Sigmoid colon (tissue), 7 donors: ENCODE measurements at regions of chr9 and their contacts with region 1.

Region 1: GRCh38 chr9:72364679-72365524 is at the start of gene ZFAND5:
- DNase-seq: peak; percentile 100
- H3K4me3 ChIP-seq: peak within 1 kb of the TSS; percentile 73 to 96 (median 88)
- H3K27ac ChIP-seq: peak within 1 kb of the TSS; percentile 99 to 100 (median 100)
- H3K4me1 ChIP-seq: peaks cover 0 to 28% (median 26%) of the 10 kb centered on the region in 4 donors
- H3K27me3 ChIP-seq: no peaks in the 10 kb centered on the region
- CTCF ChIP-seq: no peak
- EP300 ChIP-seq: peak in 2 of 4 donors; percentile 71 to 74
- POLR2A ChIP-seq: peak; percentile 94 to 97
- total RNA-seq, gene ZFAND5: 126 to 307 (median 177) TPM

Region 2: GRCh38 chr9:70413798-70414775 is 1950.8 kb before region 1 on chr9 and contains the start of gene KLF9:
- intact Hi-C with region 1: loop called (anchors 5 kb)
- DNase-seq: peak; percentile 100
- H3K4me3 ChIP-seq: peak within 1 kb of the TSS; percentile 79 to 96 (median 84)
- H3K27ac ChIP-seq: peak within 1 kb of the TSS; percentile 98 to 100 (median 99)
- H3K4me1 ChIP-seq: peaks cover 0 to 54% (median 46%) of the 10 kb centered on the region in 4 donors
- H3K27me3 ChIP-seq: no peaks in the 10 kb centered on the region
- CTCF ChIP-seq: no peak
- EP300 ChIP-seq: peak; percentile 83 to 97 (median 93)
- POLR2A ChIP-seq: peak; percentile 97
- total RNA-seq, gene KLF9: 120 to 184 (median 159) TPM

Region 3: GRCh38 chr9:71683598-71684235 is 681.2 kb before region 1 on chr9:
- intact Hi-C with region 1: no loop called
- DNase-seq: no peak
- H3K4me3 ChIP-seq: no peak overlapping the region
- H3K27ac ChIP-seq: no peak overlapping the region
- H3K4me1 ChIP-seq: peaks cover 0 to 40% (median 28%) of the 10 kb centered on the region in 4 donors
- H3K27me3 ChIP-seq: no peaks in the 10 kb centered on the region
- CTCF ChIP-seq: peak in 3 of 4 experiments; percentile 17 to 38 (median 30)
- EP300 ChIP-seq: no peak
- POLR2A ChIP-seq: no peak

Region 4: GRCh38 chr9:72315510-72316311 is 49.2 kb before region 1 on chr9:
- intact Hi-C with region 1: loop called (anchors 1 kb)
- DNase-seq: peak; percentile 82
- H3K4me3 ChIP-seq: peak overlapping the region in 2 of 4 donors; percentile 26 to 30
- H3K27ac ChIP-seq: peak overlapping the region; percentile 74 to 85 (median 78)
- H3K4me1 ChIP-seq: peaks cover 0 to 48% (median 37%) of the 10 kb centered on the region in 4 donors
- H3K27me3 ChIP-seq: no peaks in the 10 kb centered on the region
- CTCF ChIP-seq: no peak
- EP300 ChIP-seq: peak in 1 of 4 donors; percentile 38
- POLR2A ChIP-seq: no peak

Region 5: GRCh38 chr9:72526901-72527800 is 162.2 kb after region 1 on chr9:
- intact Hi-C with region 1: loop called (anchors 5 kb)
- DNase-seq: peak; percentile 93
- H3K4me3 ChIP-seq: peak overlapping the region in 3 of 4 donors; percentile 27 to 30 (median 28)
- H3K27ac ChIP-seq: peak overlapping the region; percentile 62 to 78 (median 71)
- H3K4me1 ChIP-seq: peaks cover 0 to 34% (median 20%) of the 10 kb centered on the region in 4 donors
- H3K27me3 ChIP-seq: no peaks in the 10 kb centered on the region
- CTCF ChIP-seq: no peak
- EP300 ChIP-seq: no peak
- POLR2A ChIP-seq: peak in 1 of 2 donors; percentile 26

Region 6: DNA sequence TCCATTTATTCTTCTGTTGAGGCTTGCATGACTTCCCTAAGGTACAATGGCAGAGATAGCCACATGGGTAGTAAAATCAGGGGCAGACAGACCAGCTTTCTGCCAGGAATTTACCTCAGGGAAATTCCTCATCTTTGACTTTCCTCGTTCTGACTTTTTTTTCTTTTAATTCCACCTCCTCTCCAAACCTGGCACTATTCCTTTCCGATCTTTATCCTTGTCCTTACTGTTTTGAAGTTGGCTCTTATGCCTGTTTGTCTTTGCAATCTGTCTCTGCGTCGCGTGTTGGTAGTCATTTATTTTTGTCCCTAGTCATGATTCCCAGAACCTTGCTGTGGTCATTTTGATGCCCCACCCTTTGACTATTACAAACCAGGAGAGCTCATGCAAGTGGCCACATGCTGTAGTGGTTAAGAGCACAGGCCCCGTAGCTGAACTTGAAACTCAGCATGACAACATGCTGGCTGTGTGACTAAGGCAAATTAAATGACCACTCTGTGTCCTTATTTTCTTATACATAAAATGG is 175.5 kb after region 1 on chr9:
- intact Hi-C with region 1: no loop called
- DNase-seq: no peak
- H3K4me3 ChIP-seq: no peak overlapping the region
- H3K27ac ChIP-seq: no peak overlapping the region
- H3K4me1 ChIP-seq: no peaks in the 10 kb centered on the region
- H3K27me3 ChIP-seq: no peaks in the 10 kb centered on the region
- CTCF ChIP-seq: no peak
- EP300 ChIP-seq: no peak
- POLR2A ChIP-seq: no peak

Region 7: DNA sequence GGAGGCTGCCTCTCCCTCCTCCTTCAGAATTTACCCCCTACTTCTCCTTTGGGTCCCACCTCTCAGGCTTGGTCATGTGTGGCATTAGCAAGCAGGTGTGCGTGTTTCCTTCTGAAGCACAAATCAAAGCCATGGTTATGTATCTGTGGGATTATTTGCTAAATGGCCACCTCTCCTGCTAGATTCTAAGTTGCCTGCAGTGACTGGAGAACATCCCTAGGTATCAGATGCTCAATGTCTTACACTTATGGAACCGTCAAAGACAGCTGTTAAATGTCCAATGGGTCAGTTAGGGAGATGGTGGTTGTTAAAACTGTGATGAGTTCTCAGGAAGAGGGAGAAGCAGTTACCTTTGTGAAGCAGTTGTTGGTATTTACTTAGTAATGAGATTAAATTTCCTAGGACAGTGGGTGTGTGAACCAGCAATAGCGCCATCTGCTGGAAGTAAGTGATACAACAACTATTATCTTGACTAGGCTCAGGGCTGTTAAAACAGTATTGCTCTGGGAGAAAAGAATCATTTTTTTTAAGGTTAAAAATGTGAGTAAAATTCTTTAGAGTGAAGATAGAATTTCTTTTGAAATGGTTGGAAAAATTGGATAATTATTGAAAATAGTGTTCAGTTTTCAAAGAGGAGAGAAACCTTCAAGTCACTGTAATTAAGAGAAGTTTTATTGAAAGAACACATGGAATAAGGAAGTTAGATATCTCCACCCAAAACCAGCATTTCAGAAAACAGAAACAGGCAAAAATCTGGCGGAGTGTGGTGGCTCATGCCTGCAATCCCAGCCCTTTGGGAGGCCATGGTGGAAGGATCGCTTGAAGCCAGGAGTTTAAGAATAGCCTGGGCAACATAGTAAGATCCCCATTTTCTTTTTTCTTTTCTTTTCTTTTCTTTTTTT is 227.9 kb after region 1 on chr9:
- intact Hi-C with region 1: loop called (anchors 2 kb)
- DNase-seq: no peak
- H3K4me3 ChIP-seq: no peak overlapping the region
- H3K27ac ChIP-seq: no peak overlapping the region
- H3K4me1 ChIP-seq: peaks cover 0 to 41% (median 24%) of the 10 kb centered on the region in 4 donors
- H3K27me3 ChIP-seq: no peaks in the 10 kb centered on the region
- CTCF ChIP-seq: peak; percentile 67 to 87 (median 80)
- EP300 ChIP-seq: no peak
- POLR2A ChIP-seq: no peak